Activated naive CD4-positive, alpha-beta T cell treated with anti-CD3 and anti-CD28 coated beads, Interleukin-2, amount 10 ng/mL, durations not matched to agents 7 days and 5 days (primary cell): ENCODE measurements at regions of chr15 and their contacts with region 1.

Region 1: DNA sequence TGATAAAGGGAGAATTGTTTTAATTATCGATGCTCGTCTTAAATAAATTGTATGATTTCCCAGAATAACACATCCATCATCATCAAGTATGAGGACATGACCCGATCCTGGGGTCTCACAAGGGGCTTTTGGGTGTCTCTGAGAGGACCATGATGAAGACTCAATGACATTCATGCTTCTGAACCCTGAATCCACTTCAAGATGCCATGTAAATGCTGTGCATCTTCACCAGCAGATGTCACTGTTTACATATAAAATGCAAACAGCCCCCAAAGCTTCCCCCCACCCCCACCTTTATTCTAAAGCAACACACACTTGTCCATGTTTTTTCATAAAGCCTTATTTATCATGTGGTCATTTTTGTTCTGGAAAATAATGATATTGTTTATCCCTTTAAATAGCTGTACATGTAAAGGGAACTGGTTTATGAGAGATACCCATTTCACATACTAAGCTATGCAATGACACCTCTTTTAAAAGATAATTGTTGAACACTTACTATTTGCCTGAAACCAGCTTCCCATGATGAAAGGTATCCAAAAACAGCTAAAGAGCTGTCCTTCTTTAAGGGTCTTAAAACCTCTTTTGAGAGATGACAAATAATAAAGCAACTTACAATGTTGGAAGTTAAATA is 69.7 kb upstream of the UBE3A start:
- DNase-seq: no peak
- H3K4me3 Mint-ChIP-seq: no peak overlapping the region
- H3K27ac Mint-ChIP-seq: no peak overlapping the region
- H3K4me1 Mint-ChIP-seq: no peaks in the 10 kb centered on the region
- H3K27me3 Mint-ChIP-seq: no peaks in the 10 kb centered on the region

Region 2: GRCh38 chr15:25426896-25427610 is 81.4 kb before region 1 on chr15:
- CTCF ChIA-PET with region 1: no interaction called
- DNase-seq: no peak
- H3K4me3 Mint-ChIP-seq: no peak overlapping the region
- H3K27ac Mint-ChIP-seq: no peak overlapping the region
- H3K4me1 Mint-ChIP-seq: peaks cover 7% of the 10 kb centered on the region
- H3K27me3 Mint-ChIP-seq: no peaks in the 10 kb centered on the region

Region 3: DNA sequence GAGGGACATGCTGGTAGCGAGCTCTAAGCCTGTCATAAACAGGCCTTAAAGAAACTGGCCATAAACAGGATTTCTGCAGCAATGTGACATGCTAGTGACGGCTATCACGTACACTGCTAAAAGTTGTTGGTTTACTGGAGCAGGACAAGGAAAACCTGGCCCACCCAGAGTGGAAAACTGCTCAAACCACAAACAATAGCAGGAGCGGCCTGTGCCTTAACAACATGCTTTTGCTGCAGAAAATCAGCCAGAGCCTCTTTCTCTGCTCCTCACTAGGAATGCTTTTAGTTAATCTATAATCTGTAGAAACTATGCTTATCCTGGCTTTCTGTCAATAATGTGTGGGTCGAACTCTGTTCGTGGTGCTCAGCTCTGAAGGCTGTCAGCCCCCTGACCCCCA is 133.3 kb after region 1 on chr15:
- CTCF ChIA-PET with region 1: no interaction called
- DNase-seq: no peak
- H3K4me3 Mint-ChIP-seq: no peak overlapping the region
- H3K27ac Mint-ChIP-seq: no peak overlapping the region
- H3K4me1 Mint-ChIP-seq: no peaks in the 10 kb centered on the region
- H3K27me3 Mint-ChIP-seq: peaks cover 29% of the 10 kb centered on the region

Region 4: DNA sequence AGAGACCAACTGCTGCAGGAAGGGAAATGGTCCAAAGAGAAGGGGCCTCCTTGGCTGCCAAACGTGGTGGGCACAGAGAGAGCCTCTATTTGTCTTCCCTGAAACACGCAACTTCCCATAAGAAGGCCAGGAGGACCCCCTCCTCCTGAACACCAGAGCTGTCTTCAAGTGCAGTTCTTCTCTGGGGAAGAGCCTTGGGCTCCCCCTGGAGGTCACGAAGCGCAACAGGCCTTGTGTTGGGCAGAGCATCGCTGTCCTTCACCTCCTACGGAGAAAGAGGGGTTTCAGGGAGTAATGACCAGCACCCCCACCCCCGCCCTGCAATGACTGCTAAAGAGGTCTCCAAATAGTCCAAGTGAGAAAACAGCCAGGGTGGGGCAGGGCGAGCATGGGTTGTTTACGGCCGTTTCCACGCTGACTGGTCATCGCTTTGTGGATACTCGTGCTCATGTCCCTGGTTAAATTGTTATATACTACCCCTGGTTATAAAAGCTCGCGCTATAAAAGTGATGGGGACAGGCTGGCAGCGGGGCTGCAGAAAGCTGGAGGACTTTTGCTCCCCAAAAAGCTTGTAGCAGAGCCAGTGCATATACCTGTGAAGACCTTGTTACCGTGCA is 752.1 kb after region 1 on chr15:
- CTCF ChIA-PET with region 1: interaction called, 11 read pairs
- DNase-seq: peak; percentile 33
- H3K4me3 Mint-ChIP-seq: no peak overlapping the region
- H3K27ac Mint-ChIP-seq: no peak overlapping the region
- H3K4me1 Mint-ChIP-seq: no peaks in the 10 kb centered on the region
- H3K27me3 Mint-ChIP-seq: no peaks in the 10 kb centered on the region